Aorta (tissue), 5 donors: ENCODE measurements at regions of chr13 and their contacts with region 1.

Region 1: DNA sequence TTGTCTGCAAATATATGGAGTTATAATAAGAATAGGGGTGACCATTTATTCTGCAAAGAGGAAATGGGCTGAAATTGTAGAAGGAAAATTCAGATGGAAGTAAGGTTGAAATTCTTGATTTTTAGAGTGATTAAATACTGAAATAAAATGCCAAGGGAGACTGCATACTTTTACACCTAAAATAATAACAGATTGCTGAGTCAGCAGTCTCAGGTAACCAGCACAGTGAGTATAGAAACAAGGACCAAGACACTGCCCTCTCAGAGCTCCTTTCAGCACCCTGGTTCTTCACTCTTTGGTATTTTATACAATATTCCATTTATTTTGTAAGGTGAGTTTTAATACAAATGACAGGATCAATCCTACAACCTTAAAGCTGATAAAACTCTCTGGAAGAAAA is 48.8 kb upstream of the MLNR start:
- DNase-seq: no peak
- ATAC-seq: no peak
- H3K4me3 ChIP-seq: no peak overlapping the region
- H3K27ac ChIP-seq: no peak overlapping the region
- H3K4me1 ChIP-seq: no peaks in the 10 kb centered on the region
- H3K27me3 ChIP-seq: no peaks in the 10 kb centered on the region

Region 2: DNA sequence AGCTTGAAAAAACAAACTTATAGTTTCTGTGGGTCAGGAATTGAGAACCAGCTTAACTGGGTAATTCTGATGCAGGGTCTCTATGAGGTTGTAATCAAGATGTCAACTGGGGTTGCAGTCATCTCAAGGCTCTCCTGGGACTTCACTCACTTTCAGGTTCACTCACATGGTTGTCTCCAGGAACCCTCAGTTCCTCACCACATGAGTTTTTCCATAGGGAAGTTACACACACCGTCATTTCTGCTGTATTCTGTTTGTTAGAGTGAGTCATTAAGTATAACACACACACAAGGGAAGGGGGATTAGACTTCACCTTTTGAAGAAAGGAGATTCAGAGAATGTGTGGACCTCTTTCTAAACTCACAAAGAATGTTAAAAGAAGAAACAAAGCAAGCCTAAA is 13.9 kb after region 1 on chr13:
- intact Hi-C with region 1: loop called in 1 of 2 experiments (anchors 1 kb)
- DNase-seq: no peak
- ATAC-seq: no peak
- H3K4me3 ChIP-seq: no peak overlapping the region
- H3K27ac ChIP-seq: no peak overlapping the region
- H3K4me1 ChIP-seq: no peaks in the 10 kb centered on the region
- H3K27me3 ChIP-seq: no peaks in the 10 kb centered on the region

Region 3: GRCh38 chr13:49287995-49288394 is 116.6 kb after region 1 on chr13:
- intact Hi-C with region 1: no loop called
- DNase-seq: no peak
- ATAC-seq: no peak
- H3K4me3 ChIP-seq: no peak overlapping the region
- H3K27ac ChIP-seq: no peak overlapping the region
- H3K4me1 ChIP-seq: no peaks in the 10 kb centered on the region
- H3K27me3 ChIP-seq: no peaks in the 10 kb centered on the region